GM12878 (cell line): ENCODE measurements at regions of chr19 and their contacts with region 1.

Region 1: DNA sequence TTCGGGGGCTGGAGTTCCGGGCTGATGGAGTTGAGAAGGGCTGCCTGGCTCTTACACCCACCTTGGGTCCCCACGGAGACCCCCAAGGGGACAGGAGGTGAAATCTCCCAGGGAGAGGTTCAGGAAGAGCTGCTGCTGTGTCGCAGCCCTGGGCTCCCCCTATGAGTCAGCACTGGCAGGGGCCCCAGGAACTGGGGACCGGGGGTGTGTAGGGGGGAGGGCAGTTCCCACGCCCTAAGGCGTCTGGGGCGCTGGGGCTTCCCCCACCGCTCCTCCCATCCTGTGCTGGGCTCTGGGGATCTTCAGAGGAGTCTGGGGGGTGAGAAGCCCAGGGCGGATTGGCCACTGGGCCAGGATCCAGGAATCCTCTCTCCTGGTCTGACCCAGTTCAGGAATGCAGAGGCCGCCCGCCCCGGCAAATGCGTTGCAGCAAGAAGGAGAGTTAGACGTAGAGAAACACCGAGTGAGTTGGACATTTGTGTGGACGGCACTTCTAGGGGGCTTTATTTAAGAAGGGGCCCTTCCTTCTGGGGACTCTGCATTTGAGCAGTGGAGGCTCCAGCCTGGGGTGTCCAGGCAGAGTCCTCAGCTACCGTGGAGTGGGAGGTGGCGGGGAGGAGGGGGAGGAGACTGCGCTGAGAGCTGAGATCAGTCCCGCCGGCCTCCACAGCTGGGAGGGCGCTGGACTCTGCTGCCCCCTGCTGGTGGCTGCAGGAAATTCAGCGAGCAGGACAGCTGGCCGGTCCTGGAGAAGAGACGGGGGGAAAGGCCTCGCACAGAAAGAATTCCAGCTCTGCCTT is 15.0 kb upstream of the NANOS3 start:
- DNase-seq: peak; percentile 79
- ATAC-seq: peak; percentile 91
- H3K4me3 ChIP-seq: peak overlapping the region; percentile 74
- H3K27ac ChIP-seq: peak overlapping the region; percentile 99
- H3K4me1 ChIP-seq: peaks cover 8% of the 10 kb centered on the region
- H3K27me3 ChIP-seq: peaks cover 0 to 1% of the 10 kb centered on the region in 2 experiments; a peak in 2 of 4 replicates
- CTCF ChIP-seq: peak; percentile 87 to 98 (median 93)
- EP300 ChIP-seq: peak; percentile 48 to 56; a peak in 2 of 4 replicates
- POLR2A ChIP-seq: peak; percentile 87
- RAD21 ChIP-seq: peak; percentile 96

Region 2: GRCh38 chr19:13588957-13589833 is 272.7 kb before region 1 on chr19:
- CTCF ChIA-PET with region 1: interaction called, 6 read pairs
- POLR2A ChIA-PET with region 1: interaction called, 4 read pairs
- RAD21 ChIA-PET with region 1: interaction called, 8 read pairs
- SMC1A ChIA-PET with region 1: interaction called, 3 read pairs
- in situ Hi-C with region 1: loop called (anchors 5 kb)
- intact Hi-C with region 1: no loop called
- DNase-seq: no peak
- ATAC-seq: peak; percentile 96
- H3K4me3 ChIP-seq: no peak overlapping the region
- H3K27ac ChIP-seq: no peak overlapping the region
- H3K4me1 ChIP-seq: no peaks in the 10 kb centered on the region
- H3K27me3 ChIP-seq: no peaks in the 10 kb centered on the region
- CTCF ChIP-seq: peak; percentile 85 to 97 (median 90)
- EP300 ChIP-seq: no peak
- POLR2A ChIP-seq: no peak
- RAD21 ChIP-seq: peak; percentile 70

Region 3: GRCh38 chr19:13731147-13731964 is 130.6 kb before region 1 on chr19:
- CTCF ChIA-PET with region 1: interaction called, 5 read pairs
- POLR2A ChIA-PET with region 1: interaction called, 4 read pairs
- RAD21 ChIA-PET with region 1: interaction called, 11 read pairs
- SMC1A ChIA-PET with region 1: interaction called, 5 read pairs
- in situ Hi-C with region 1: no loop called
- intact Hi-C with region 1: no loop called
- DNase-seq: peak; percentile 72
- ATAC-seq: peak; percentile 100
- H3K4me3 ChIP-seq: peak overlapping the region; percentile 77
- H3K27ac ChIP-seq: peak overlapping the region; percentile 81
- H3K4me1 ChIP-seq: peaks cover 15% of the 10 kb centered on the region
- H3K27me3 ChIP-seq: no peaks in the 10 kb centered on the region
- CTCF ChIP-seq: no peak
- EP300 ChIP-seq: peak; percentile 62 to 84; a peak in 3 of 4 replicates
- POLR2A ChIP-seq: peak; percentile 80
- RAD21 ChIP-seq: no peak

Region 4: DNA sequence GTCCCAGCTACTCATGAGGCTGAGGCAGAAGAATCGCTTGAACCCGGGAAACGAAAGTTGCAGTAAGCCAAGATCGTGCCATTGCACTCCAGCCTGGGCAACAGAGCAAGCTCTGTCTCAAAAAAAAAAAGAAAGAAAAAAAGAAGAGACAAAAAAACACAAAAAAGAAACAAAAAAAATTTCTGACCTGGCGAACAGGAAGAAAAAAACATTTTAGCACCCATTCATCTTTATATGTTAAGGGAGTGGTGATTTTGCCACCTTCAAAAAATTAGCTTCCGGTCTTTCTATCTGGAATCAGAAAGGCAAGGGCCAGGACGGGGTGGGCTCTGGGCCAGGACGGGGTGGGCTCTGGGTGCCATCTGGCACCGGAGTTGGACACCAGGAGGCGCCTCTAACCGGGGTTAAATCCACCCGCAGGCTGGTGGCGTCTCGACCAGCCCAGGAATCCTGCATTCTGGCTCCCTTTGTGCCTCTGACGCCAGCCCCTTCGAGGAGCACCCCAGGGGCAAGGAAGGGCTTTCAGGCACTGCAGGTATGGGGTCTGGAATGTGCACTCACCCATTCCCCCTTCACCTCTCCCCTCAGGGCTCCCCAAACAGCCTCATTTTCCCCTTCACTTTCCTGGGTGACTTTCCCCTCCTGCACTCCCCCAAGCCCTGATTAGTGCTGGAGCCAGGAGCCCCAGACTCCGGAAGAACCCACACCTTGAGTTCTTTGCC is 77.0 kb before region 1 on chr19:
- CTCF ChIA-PET with region 1: interaction called, 136 read pairs
- POLR2A ChIA-PET with region 1: interaction called, 28 read pairs
- RAD21 ChIA-PET with region 1: interaction called, 65 read pairs
- SMC1A ChIA-PET with region 1: interaction called, 65 read pairs
- in situ Hi-C with region 1: loop called (anchors 5 kb)
- intact Hi-C with region 1: loop called (anchors 1 kb)
- DNase-seq: no peak
- ATAC-seq: peak; percentile 91
- H3K4me3 ChIP-seq: no peak overlapping the region
- H3K27ac ChIP-seq: no peak overlapping the region
- H3K4me1 ChIP-seq: peaks cover 26% of the 10 kb centered on the region
- H3K27me3 ChIP-seq: no peaks in the 10 kb centered on the region
- CTCF ChIP-seq: peak; percentile 47 to 79 (median 74)
- EP300 ChIP-seq: no peak
- POLR2A ChIP-seq: no peak
- RAD21 ChIP-seq: peak; percentile 76

Region 5: GRCh38 chr19:13839130-13839937 is 22.6 kb before region 1 on chr19:
- CTCF ChIA-PET with region 1: interaction called, 51 read pairs
- POLR2A ChIA-PET with region 1: interaction called, 85 read pairs
- RAD21 ChIA-PET with region 1: interaction called, 68 read pairs
- SMC1A ChIA-PET with region 1: interaction called, 37 read pairs
- in situ Hi-C with region 1: no loop called
- intact Hi-C with region 1: no loop called
- DNase-seq: peak; percentile 69
- ATAC-seq: peak; percentile 66
- H3K4me3 ChIP-seq: peak overlapping the region; percentile 92
- H3K27ac ChIP-seq: peak overlapping the region; percentile 96
- H3K4me1 ChIP-seq: peaks cover 55% of the 10 kb centered on the region
- H3K27me3 ChIP-seq: no peaks in the 10 kb centered on the region
- CTCF ChIP-seq: 0 out of 6 replicates have a peak, but pooled peaks of 1 of the 3 experiments have one; percentile 8
- EP300 ChIP-seq: 0 out of 4 replicates have a peak, but pooled peaks of 1 of the 2 experiments have one; percentile 11
- POLR2A ChIP-seq: peak; percentile 89
- RAD21 ChIP-seq: no peak; the same call in 1 of the 2 replicates

Region 6: GRCh38 chr19:14073261-14073924 is 211.5 kb after region 1 on chr19:
- CTCF ChIA-PET with region 1: interaction called, 16 read pairs
- POLR2A ChIA-PET with region 1: no interaction called
- RAD21 ChIA-PET with region 1: interaction called, 4 read pairs
- SMC1A ChIA-PET with region 1: no interaction called
- in situ Hi-C with region 1: no loop called
- intact Hi-C with region 1: no loop called
- DNase-seq: no peak
- ATAC-seq: peak; percentile 65
- H3K4me3 ChIP-seq: peak overlapping the region; percentile 81
- H3K27ac ChIP-seq: no peak overlapping the region
- H3K4me1 ChIP-seq: peaks cover 19% of the 10 kb centered on the region
- H3K27me3 ChIP-seq: no peaks in the 10 kb centered on the region
- CTCF ChIP-seq: peak; percentile 41 to 70 (median 44); a peak in 5 of 6 replicates
- EP300 ChIP-seq: no peak
- POLR2A ChIP-seq: no peak; the same call in 1 of the 2 replicates
- RAD21 ChIP-seq: 0 out of 2 replicates have a peak, but pooled peaks have one; percentile 13